Spleen (tissue), 13 donors: ENCODE measurements at regions of chr6 and their contacts with region 1.

Region 1: DNA sequence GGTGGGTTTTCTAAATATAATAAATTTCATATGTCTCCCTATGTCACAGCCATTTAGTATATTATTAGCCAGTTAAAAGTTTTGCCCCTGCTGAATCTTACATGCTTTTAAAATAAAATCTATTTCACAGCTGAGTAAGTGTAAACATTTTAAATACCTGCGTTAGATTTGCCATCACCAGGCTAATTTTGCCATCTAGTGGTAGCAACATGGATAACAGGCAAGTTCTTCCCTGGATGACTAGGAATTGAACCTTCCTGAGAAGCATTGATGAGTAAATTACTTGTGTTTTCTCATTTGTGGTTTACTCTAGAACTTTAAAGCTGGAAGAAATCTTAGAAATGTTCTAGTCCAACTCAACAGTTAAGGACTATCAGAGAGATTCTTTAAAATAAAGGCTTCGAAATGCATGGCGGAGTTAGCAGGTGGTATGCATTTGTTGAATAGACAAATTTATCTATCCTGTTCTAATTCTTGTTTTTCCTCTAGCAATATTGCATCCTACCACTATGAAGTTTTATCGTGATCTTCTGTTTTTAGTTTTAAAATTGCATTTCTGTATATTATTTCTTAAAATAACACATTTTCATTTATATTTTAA is 2.6 kb downstream of the PRSS35 start:
- DNase-seq: no peak
- H3K4me3 ChIP-seq: no peak overlapping the region
- H3K27ac ChIP-seq: no peak overlapping the region
- H3K4me1 ChIP-seq: peaks cover 0 to 20% (median 12%) of the 10 kb centered on the region in 6 donors
- H3K27me3 ChIP-seq: peaks cover 0 to 39% (median 9%) of the 10 kb centered on the region in 7 donors
- CTCF ChIP-seq: peak in 10 of 11 experiments; percentile 30 to 82 (median 72)
- POLR2A ChIP-seq: no peak

Region 2: DNA sequence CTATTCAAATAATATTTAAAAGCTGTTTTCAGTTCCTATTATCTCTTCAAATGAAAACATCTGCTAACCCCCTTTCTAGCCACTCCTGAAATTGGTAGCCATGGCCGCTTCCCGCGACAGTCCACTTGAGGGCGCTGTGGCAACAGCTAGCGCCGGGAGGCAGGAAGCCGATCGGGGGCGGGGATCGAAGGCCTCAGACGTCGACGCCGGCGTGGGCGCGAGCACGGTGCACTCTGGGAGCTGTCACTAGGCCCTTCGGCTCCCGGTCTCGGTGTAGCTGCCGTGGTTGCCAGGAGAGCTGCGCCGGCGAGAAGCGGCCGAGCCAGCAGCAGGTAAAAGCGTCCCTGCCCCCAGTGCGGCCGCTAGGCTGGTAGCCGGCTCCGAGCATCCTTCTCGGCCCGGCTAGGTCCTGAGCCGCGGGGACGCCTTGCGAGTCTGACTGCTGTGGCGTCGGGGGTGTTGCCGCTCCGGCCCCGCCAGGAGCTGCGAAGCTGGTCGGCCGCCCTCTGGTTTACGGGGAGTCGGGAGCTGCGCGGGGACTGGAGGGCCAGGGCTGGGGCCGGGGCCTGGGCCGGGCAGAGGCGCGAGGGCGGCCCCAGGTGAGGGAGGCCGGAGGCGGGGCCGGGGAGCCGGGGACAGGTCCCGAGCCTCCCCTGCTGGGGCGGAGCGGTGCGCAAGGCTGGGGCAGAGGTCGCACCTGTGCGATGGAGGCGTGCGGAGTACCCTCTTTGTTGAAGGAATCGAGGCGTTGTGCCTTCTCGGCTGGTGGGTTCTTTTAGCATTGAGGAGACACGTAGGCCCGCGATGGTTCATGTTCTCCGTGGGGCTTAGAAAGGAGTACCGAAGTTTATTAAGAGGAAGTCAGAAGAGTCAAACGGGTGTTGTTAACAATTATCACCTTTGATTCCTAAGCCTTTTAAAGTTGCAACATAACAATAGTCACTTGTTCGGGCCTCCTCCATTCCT is 447.2 kb before region 1 on chr6 and contains the start of gene DOP1A:
- intact Hi-C with region 1: loop called (anchors 10 kb)
- DNase-seq: peak; percentile 100
- H3K4me3 ChIP-seq: peak within 1 kb of the TSS; percentile 81 to 97 (median 92)
- H3K27ac ChIP-seq: peak within 1 kb of the TSS; percentile 83 to 95 (median 94)
- H3K4me1 ChIP-seq: peaks cover 3 to 84% (median 61%) of the 10 kb centered on the region in 6 donors
- H3K27me3 ChIP-seq: no peaks in the 10 kb centered on the region
- CTCF ChIP-seq: peak; percentile 80 to 98 (median 95)
- POLR2A ChIP-seq: no peak
- total RNA-seq, gene DOP1A: 23.0 to 47.6 (median 30.3) TPM

Region 3: DNA sequence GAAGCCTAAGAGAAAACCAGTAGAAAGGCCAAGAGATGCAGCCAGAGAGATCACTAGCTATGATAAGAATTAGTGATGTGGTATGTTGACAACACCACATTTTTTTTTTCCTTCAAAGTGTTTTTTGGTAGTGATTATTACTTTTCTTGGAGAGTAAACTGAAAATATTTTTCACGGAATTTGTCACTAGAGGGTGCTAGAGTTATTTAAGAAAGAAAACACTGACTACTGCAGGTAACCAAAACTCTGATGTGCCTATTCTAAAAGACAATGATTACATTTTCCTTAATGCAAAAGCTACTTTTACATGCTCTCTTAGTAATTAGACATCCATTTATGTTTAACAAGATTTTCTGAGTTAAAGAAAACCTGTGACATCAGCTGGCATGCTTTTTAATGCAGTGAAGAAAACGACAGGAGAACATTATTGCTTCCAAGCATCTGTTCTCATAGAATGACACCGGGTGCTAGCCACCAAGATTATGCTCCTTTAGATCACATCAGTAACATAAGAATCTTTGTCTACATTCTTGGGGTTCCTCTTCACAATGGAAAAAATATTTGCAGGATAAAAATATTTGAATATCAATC is 293.0 kb before region 1 on chr6:
- intact Hi-C with region 1: loop called (anchors 5 kb)
- DNase-seq: no peak
- H3K4me3 ChIP-seq: no peak overlapping the region
- H3K27ac ChIP-seq: no peak overlapping the region
- H3K4me1 ChIP-seq: no peaks in the 10 kb centered on the region
- H3K27me3 ChIP-seq: no peaks in the 10 kb centered on the region
- CTCF ChIP-seq: peak in 8 of 11 experiments; percentile 18 to 44 (median 29)
- POLR2A ChIP-seq: no peak

Region 4: GRCh38 chr6:83417880-83418663 is 96.9 kb before region 1 on chr6:
- intact Hi-C with region 1: loop called (anchors 10 kb)
- DNase-seq: no peak
- H3K4me3 ChIP-seq: no peak overlapping the region
- H3K27ac ChIP-seq: no peak overlapping the region
- H3K4me1 ChIP-seq: no peaks in the 10 kb centered on the region
- H3K27me3 ChIP-seq: no peaks in the 10 kb centered on the region
- CTCF ChIP-seq: peak in 7 of 11 experiments; percentile 9 to 49 (median 42)
- POLR2A ChIP-seq: no peak